Left cardiac atrium (tissue), 4 donors: ENCODE measurements at regions of chr20 and their contacts with region 1.

Region 1: DNA sequence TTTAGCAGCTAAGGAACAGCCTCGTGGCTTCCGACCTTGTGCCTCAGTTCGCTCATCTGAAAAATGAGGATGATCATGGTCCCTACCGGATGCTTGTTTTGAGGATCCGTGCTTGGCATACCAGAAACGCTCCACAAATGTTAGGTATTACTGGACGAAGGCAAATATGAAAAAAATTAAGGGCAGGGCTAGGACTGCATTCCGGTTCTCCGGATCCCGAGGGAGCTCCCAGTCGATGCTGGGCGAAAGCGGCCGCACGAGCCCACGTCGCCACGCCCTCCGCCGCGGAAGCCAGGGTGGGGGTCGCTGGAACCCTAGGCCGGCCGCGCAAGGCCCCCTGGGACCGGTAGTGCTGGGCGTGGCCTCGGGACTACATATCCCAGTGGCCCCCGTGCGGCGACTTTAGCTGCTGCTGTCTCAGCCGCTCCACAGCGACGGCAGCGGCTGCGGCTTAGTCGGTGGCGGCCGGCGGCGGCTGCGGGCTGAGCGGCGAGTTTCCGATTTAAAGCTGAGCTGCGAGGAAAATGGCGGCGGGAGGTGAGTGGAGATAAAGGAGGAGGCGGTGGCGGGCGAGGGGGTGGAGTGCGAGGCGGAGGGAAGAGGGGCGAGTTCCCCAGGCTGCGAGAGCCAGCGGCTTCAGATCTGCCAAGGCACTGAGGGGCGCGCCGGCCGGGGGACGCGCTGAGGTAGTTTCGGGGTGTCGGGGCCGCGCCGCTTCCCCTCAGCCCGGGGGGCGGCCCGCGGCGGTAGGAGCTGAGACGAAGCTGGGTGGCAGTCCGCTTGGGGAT is at the start of gene NCOA3:
- DNase-seq: peak; percentile 98
- ATAC-seq: peak; percentile 98 to 99
- total RNA-seq, gene NCOA3: 18.6 to 25.2 TPM

Region 2: GRCh38 chr20:47392015-47392720 is 109.5 kb before region 1 on chr20:
- intact Hi-C with region 1: loop called in 1 of 2 experiments (anchors 5 kb)
- DNase-seq: peak; percentile 29
- ATAC-seq: peak; percentile 41 to 84

Region 3: DNA sequence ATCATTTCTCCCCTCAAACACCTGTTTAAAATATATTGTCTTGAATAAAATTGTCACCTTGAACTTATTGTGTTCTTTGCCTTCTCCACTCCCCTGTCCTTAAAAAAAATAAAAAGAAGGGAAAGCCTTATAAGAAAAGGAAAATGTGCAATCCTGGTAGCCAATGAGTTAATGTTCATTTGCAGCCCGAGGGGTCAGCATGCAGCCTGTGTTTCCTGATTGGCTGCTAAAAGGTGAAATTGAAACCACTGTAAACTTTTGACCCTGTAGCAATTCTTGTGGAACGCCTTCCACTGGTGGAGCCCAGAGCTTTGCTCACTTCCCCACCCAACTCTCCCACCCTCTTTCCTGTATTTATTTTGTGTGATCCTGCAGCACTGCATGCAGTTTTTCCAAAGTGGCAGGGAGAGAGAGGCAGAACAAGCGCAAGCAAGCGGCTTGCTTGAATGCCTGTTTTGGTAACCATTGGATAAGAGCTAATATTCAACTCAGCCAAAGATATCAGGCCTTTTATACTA is 74.9 kb after region 1 on chr20:
- intact Hi-C with region 1: loop called in 1 of 2 experiments (anchors 5 kb)
- DNase-seq: peak; percentile 59
- ATAC-seq: peak; percentile 96 to 97

Region 4: GRCh38 chr20:47610247-47610944 is 108.7 kb after region 1 on chr20:
- intact Hi-C with region 1: loop called in 1 of 2 experiments (anchors 10 kb)
- DNase-seq: peak; percentile 79
- ATAC-seq: peak in 1 of 2 donors; percentile 89

Region 5: DNA sequence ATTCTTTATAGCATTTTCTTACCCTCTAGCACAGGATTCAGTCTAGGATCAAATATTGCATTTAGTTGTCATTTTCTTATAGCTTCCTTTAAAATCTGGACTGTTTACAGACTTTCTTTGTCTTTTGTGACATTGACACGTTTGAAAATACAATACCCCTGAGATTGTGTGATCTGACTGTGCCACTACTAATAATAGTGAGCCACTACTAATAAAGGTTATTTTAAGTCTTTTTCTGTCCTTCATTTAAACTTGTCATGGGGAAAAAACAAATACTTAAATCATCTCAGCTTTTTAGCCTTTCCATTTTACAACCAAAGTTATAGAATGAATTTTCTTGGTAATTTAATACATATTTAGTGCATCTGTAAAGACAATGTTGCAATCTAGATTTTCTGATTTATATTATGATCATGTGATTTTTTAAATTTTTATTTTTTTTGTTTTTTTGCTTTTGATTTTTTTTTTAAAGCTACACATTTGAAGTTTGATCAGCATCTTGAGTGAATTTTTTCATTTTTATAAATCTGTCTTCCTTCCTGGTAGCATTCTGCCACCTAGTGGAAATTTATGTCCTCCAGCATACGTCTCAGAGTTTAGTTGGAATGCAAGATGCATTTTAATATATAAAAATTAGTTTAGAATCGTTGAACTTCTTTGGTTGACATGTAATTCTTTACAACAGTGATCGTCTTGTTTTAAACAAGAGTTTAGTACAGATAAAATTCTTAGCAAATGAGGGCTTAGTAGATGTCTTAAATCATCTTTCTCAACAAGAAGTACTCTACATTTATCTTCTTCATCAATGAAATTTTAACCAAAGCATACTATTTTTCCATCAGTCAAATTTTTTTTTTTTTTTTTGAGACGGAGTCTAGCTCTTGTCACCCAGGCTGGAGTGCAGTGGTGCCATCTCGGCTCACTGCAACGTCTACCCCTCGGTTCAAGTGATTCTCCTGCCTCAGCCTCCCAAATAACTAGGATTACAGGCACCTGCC is 119.4 kb after region 1 on chr20:
- intact Hi-C with region 1: loop called (anchors 5 to 10 kb)
- DNase-seq: no peak
- ATAC-seq: peak in 1 of 2 donors; percentile 34